ENCODE measurements at regions of chr4 and their contacts with region 1.

Region 1: GRCh38 chr4:13705521-13706041 is 78.1 kb upstream of the BOD1L1 start:
- DNase-seq: peak; percentile 68
- ATAC-seq: peak; percentile 93

Region 2: GRCh38 chr4:13694256-13694655 is 11.3 kb before region 1 on chr4:
- intact Hi-C with region 1: loop called (anchors 1 kb)
- DNase-seq: no peak
- ATAC-seq: peak; percentile 83

Region 3: GRCh38 chr4:13840502-13841190 is 135.1 kb after region 1 on chr4:
- intact Hi-C with region 1: loop called (anchors 5 kb)
- DNase-seq: no peak
- ATAC-seq: peak; percentile 74

Region 4: GRCh38 chr4:13953083-13953482 is 247.5 kb after region 1 on chr4:
- intact Hi-C with region 1: no loop called
- DNase-seq: no peak
- ATAC-seq: no peak